ENCODE measurements at regions of chr18 and their contacts with region 1.

Region 1: GRCh38 chr18:45621061-45621511 is 5.8 kb downstream of the SLC14A2 start:
- DNase-seq: peak; percentile 53
- H3K4me3 Mint-ChIP-seq: no peak overlapping the region
- H3K27ac Mint-ChIP-seq: no peak overlapping the region
- H3K4me1 Mint-ChIP-seq: peaks cover 12% of the 10 kb centered on the region
- H3K27me3 Mint-ChIP-seq: peaks cover 15% of the 10 kb centered on the region
- CTCF ChIP-seq: peak; percentile 81

Region 2: GRCh38 chr18:45608400-45608799 is 12.7 kb before region 1 on chr18:
- CTCF ChIA-PET with region 1: interaction called, 15 read pairs
- POLR2A ChIA-PET with region 1: interaction called, 3 read pairs
- intact Hi-C with region 1: no loop called
- DNase-seq: no peak
- H3K4me3 Mint-ChIP-seq: no peak overlapping the region
- H3K27ac Mint-ChIP-seq: no peak overlapping the region
- H3K4me1 Mint-ChIP-seq: peaks cover 4% of the 10 kb centered on the region
- H3K27me3 Mint-ChIP-seq: peaks cover 21% of the 10 kb centered on the region
- CTCF ChIP-seq: no peak

Region 3: GRCh38 chr18:45634454-45634853 is 13.4 kb after region 1 on chr18:
- CTCF ChIA-PET with region 1: interaction called, 10 read pairs
- POLR2A ChIA-PET with region 1: no interaction called
- intact Hi-C with region 1: no loop called
- DNase-seq: no peak
- H3K4me3 Mint-ChIP-seq: no peak overlapping the region
- H3K27ac Mint-ChIP-seq: no peak overlapping the region
- H3K4me1 Mint-ChIP-seq: no peaks in the 10 kb centered on the region
- H3K27me3 Mint-ChIP-seq: no peaks in the 10 kb centered on the region
- CTCF ChIP-seq: no peak

Region 4: DNA sequence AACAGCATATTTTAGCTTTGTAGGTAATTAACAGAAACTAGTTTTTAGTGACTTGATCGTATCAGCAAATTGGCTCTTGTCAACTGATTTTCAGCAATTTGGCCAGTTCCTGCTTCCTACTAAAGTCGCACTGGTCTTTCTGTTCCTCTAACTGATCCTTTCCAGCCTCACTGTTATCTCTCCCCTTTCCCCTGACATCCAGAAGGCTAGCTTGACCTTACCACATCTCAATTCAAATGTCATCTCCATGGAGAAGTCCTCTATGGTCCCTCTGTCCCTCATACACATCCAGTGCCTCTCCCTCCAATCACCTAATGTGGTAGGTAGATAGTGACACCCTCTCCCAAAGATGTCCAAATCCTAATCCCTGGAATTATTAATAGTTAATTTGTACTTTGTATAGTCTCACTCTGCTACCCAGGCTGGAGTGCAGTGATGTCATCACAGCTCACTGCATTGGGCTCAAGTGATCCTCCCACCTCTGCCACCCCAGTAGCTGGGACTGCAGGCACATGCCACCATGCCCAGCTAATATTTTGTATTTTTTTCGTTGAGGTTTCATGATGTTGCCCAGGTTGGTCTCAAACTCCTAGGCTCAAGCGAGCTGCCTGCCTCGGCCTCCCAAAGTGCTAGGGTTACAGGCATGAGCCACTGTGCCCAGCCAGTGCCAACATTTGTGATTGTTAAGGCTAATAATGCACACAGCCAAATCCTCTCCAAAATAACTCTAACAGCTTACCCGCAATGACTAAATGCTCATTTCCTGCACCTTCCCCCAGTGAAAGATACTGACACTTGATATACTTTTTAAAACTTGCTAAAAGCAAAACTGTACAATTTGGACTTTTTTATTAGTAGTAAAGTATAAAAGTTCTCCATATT is 434.1 kb after region 1 on chr18:
- CTCF ChIA-PET with region 1: no interaction called
- POLR2A ChIA-PET with region 1: no interaction called
- intact Hi-C with region 1: no loop called
- DNase-seq: no peak
- H3K4me3 Mint-ChIP-seq: no peak overlapping the region
- H3K27ac Mint-ChIP-seq: no peak overlapping the region
- H3K4me1 Mint-ChIP-seq: peaks cover 23% of the 10 kb centered on the region
- H3K27me3 Mint-ChIP-seq: no peaks in the 10 kb centered on the region
- CTCF ChIP-seq: no peak